Heart right ventricle (tissue), 16 donors: ENCODE measurements at regions of chr15 and their contacts with region 1.

Region 1: GRCh38 chr15:38002883-38003477 is 68.5 kb downstream of the TMCO5A start:
- DNase-seq: peak; percentile 50 to 52
- ATAC-seq: peak; percentile 59 to 85 (median 74)
- H3K4me3 ChIP-seq: no peak overlapping the region
- H3K27ac ChIP-seq: no peak overlapping the region
- H3K4me1 ChIP-seq: peaks cover 0 to 17% (median 4%) of the 10 kb centered on the region in 9 donors
- H3K27me3 ChIP-seq: no peaks in the 10 kb centered on the region
- CTCF ChIP-seq: peak; percentile 23 to 71 (median 63)

Region 2: DNA sequence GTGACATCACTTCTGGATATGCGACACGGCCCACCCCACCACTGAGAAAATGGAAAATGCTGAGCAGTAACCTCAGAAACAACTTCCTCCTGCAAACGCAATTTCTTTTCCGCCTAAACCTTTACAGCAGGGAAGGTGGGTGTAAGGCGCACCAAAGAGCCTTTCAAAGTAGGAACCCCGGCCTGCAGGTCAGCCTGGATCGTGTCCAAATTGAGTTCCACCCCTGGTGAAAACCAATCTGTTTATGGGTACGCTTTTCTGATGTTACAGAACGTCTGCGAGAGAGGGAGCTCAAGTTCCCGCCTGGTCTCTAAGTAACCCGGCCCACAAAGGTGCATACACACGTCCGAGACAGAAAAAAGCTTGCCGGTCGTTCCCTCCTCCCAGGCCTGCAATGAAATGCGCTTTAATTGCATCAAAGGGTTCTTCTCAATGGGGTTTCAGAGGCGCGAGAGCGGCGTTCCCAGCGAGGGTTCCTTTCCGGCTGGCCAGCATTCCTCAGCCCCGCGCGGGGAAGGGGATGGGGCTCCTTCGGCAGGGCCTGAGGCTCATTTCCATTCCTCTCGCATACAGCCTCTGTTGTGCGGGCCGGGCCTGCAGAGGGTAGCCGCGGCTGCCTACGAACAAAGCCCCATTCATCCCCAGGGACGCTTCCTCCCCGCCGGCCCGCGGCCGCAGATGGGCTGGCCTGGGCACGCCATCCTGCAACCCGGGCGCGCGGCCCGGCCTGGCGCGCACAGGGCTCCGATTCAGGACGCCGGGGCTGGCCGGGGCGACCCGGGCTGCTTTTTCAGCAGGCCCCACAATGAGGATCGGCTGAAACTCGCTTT is 69.6 kb after region 1 on chr15:
- intact Hi-C with region 1: loop called in 2 of 10 experiments (anchors 5 to 10 kb)
- DNase-seq: peak; percentile 65 to 79
- ATAC-seq: peak; percentile 86 to 97 (median 89)
- H3K4me3 ChIP-seq: peak overlapping the region; percentile 37 to 73 (median 63)
- H3K27ac ChIP-seq: peak overlapping the region; percentile 83 to 96 (median 90)
- H3K4me1 ChIP-seq: peaks cover 8 to 54% (median 39%) of the 10 kb centered on the region in 9 donors
- H3K27me3 ChIP-seq: peaks cover 0 to 3% (median 0%) of the 10 kb centered on the region in 7 donors
- CTCF ChIP-seq: peak in 4 of 9 donors; percentile 22 to 49 (median 33)

Region 3: GRCh38 chr15:38103564-38103963 is 100.6 kb after region 1 on chr15:
- intact Hi-C with region 1: loop called in 1 of 10 experiments (anchors 10 kb)
- DNase-seq: no peak
- ATAC-seq: no peak
- H3K4me3 ChIP-seq: no peak overlapping the region
- H3K27ac ChIP-seq: no peak overlapping the region
- H3K4me1 ChIP-seq: no peaks in the 10 kb centered on the region
- H3K27me3 ChIP-seq: no peaks in the 10 kb centered on the region
- CTCF ChIP-seq: no peak

Region 4: GRCh38 chr15:38242055-38242454 is 239.1 kb after region 1 on chr15:
- intact Hi-C with region 1: loop called in 1 of 10 experiments (anchors 10 kb)
- DNase-seq: no peak
- ATAC-seq: no peak
- H3K4me3 ChIP-seq: no peak overlapping the region
- H3K27ac ChIP-seq: no peak overlapping the region
- H3K4me1 ChIP-seq: peaks cover 0 to 5% (median 0%) of the 10 kb centered on the region in 9 donors
- H3K27me3 ChIP-seq: no peaks in the 10 kb centered on the region
- CTCF ChIP-seq: no peak

Region 5: GRCh38 chr15:38414357-38414756 is 411.4 kb after region 1 on chr15:
- intact Hi-C with region 1: loop called in 8 of 10 experiments (anchors 5 to 10 kb)
- DNase-seq: peak; percentile 35 to 66
- ATAC-seq: peak in 7 of 8 donors; percentile 88 to 94 (median 93)
- H3K4me3 ChIP-seq: no peak overlapping the region
- H3K27ac ChIP-seq: no peak overlapping the region
- H3K4me1 ChIP-seq: peaks cover 0 to 10% (median 0%) of the 10 kb centered on the region in 9 donors
- H3K27me3 ChIP-seq: peaks cover 0 to 15% (median 0%) of the 10 kb centered on the region in 7 donors
- CTCF ChIP-seq: peak; percentile 45 to 75 (median 66)

Region 6: DNA sequence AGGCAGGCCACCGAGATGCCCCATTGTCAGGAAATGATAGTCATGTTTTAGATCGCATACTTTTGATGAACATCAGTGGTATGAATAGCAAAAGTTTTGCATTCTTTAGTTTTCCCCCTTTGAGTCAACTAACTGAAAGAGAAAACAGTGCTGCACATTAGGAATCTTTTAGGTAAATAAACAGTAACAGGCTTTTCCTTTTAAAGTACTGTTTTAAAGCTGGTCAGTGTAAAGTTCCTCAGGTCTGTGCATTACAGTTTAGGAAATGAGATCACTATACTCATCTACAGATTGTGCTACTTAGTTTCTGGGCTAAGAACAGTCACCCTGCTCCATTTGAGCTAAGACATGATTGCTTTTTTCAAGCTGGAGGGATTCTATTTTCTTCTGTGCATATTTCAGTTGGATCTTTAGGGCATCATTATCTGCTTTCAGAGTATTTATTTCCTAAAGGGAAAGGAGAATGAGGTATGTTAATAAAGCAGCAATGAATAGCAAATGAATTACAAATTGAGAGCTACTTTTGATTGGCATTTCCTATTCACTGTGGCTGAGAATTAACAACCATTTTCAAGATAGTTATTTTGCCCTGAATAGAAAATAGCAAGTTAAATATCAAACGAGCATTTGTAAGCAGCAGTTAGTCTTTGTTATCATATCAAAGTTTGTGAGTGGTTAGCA is 487.4 kb after region 1 on chr15:
- intact Hi-C with region 1: no loop called
- DNase-seq: no peak
- ATAC-seq: no peak
- H3K4me3 ChIP-seq: no peak overlapping the region
- H3K27ac ChIP-seq: no peak overlapping the region
- H3K4me1 ChIP-seq: no peaks in the 10 kb centered on the region
- H3K27me3 ChIP-seq: no peaks in the 10 kb centered on the region
- CTCF ChIP-seq: no peak